Mammary epithelial cell (primary cell): ENCODE measurements at regions of chr17 and their contacts with region 1.

Region 1: GRCh38 chr17:35808962-35809854 is at the start of gene TAF15:
- DNase-seq: peak; percentile 98
- H3K4me3 ChIP-seq: peak within 1 kb of the TSS; percentile 73 to 82 (median 77)
- H3K27ac ChIP-seq: peak within 1 kb of the TSS; percentile 88
- H3K4me1 ChIP-seq: peaks cover 20% of the 10 kb centered on the region
- H3K27me3 ChIP-seq: no peaks in the 10 kb centered on the region
- CTCF ChIP-seq: peak; percentile 87 to 92
- total RNA-seq, gene TAF15: 67.2 to 270 TPM

Region 2: DNA sequence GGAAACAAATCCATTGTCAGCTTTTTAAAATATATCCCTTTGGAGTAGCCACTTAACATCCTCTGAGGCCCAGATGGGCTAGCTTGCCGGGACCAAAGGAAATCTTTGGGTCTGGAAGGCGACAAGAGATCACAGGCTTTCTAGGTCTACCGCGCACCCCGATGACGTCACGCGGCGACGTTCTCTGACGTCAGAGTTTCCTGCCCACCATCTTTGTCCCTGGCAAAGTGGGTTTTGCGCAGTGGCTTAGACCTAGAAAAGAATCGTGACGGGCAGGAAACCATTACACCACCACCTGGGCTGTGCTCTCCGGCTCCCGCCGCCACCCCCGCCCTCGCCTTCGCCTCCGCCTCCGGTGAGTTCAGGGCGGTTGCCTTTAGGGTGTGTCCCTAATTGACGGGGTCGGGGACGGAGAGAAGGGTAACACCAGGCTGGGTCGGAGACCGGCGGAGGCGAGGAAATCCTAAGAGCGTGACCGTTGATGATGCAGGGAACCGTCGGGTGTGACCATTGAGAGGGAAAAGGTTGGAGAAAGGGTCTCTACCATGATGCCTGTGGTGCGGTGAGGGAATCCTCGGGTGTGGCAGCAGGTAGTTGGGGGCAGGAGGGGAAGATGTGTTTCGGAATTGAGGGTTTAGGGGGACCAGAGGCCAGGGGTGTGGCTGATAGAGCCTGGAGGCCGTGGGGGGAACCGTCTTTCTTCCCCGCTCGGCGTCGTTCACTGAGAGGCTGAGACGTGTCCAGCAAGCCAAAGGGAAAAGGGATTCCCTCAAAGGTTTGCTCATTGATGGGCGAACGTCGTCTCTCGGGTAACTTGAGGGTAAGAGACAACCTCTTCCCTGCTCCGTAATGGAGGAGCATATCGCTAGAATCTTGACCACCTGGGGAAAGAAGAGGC is 221.9 kb before region 1 on chr17 and contains the start of gene AP2B1:
- CTCF ChIA-PET with region 1: no interaction called
- dilution Hi-C with region 1: no loop called
- in situ Hi-C with region 1: no loop called
- intact Hi-C with region 1: loop called (anchors 10 kb)
- DNase-seq: peak; percentile 96
- H3K4me3 ChIP-seq: peak within 1 kb of the TSS; percentile 38 to 89 (median 84)
- H3K27ac ChIP-seq: peak within 1 kb of the TSS; percentile 89
- H3K4me1 ChIP-seq: peaks cover 7% of the 10 kb centered on the region
- H3K27me3 ChIP-seq: no peaks in the 10 kb centered on the region
- CTCF ChIP-seq: no peak
- total RNA-seq, gene AP2B1: 168 to 227 TPM

Region 3: GRCh38 chr17:35612924-35613521 is 196.2 kb before region 1 on chr17:
- CTCF ChIA-PET with region 1: interaction called, 12 read pairs
- dilution Hi-C with region 1: no loop called
- in situ Hi-C with region 1: no loop called
- intact Hi-C with region 1: loop called (anchors 1 kb)
- DNase-seq: peak; percentile 20
- H3K4me3 ChIP-seq: no peak overlapping the region
- H3K27ac ChIP-seq: no peak overlapping the region
- H3K4me1 ChIP-seq: no peaks in the 10 kb centered on the region
- H3K27me3 ChIP-seq: no peaks in the 10 kb centered on the region
- CTCF ChIP-seq: peak; percentile 61 to 64

Region 4: GRCh38 chr17:35764123-35764991 is 44.9 kb before region 1 on chr17:
- CTCF ChIA-PET with region 1: interaction called, 12 read pairs
- dilution Hi-C with region 1: no loop called
- in situ Hi-C with region 1: loop called (anchors 5 kb)
- intact Hi-C with region 1: loop called (anchors 1 kb)
- DNase-seq: peak; percentile 86
- H3K4me3 ChIP-seq: peak overlapping the region; percentile 23 to 50 (median 44)
- H3K27ac ChIP-seq: no peak overlapping the region
- H3K4me1 ChIP-seq: peaks cover 10% of the 10 kb centered on the region
- H3K27me3 ChIP-seq: no peaks in the 10 kb centered on the region
- CTCF ChIP-seq: peak; percentile 77 to 95

Region 5: DNA sequence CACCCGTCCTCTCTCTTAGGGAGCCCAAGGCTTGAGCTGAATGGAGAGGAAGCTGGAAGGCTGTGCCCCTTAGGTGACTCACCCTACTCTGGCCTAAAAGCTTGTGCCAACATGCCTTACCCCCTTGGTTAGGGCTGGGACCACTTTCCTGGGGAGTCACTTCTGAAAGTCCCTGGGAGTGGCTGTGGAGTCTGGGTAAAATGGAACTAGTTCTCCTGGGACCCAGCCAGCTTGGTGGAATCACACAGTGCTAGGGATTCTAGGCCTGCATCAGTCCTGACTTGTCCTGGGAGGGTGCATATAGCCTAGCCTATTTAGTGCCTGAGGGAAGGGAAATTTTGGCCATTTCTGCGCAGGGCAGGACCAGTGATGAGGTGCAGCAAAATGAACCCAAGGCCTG is 24.3 kb before region 1 on chr17:
- CTCF ChIA-PET with region 1: interaction called, 9 read pairs
- dilution Hi-C with region 1: no loop called
- in situ Hi-C with region 1: no loop called
- intact Hi-C with region 1: loop called (anchors 1 kb)
- DNase-seq: peak; percentile 100
- H3K4me3 ChIP-seq: no peak overlapping the region
- H3K27ac ChIP-seq: peak overlapping the region; percentile 96
- H3K4me1 ChIP-seq: peaks cover 64% of the 10 kb centered on the region
- H3K27me3 ChIP-seq: no peaks in the 10 kb centered on the region
- CTCF ChIP-seq: no peak

Region 6: DNA sequence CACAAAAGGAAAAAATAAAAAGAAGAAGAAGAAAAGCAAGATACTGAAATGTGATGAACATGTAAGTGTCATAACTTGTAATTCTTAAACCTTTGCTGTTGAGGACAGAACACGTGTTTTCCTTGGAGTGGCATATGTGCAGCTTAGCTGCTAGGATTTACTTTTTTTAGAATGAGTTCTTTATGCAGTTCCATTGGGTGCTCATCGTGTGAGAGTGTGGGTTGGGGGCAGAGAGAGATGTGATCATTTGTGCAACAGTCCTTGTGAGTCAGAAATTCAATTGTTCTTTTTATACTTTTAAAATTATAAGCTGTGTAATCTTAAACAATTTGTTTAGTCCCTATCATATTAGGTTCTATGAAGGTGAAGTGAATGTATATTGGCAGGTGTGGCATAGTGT is 776.9 kb after region 1 on chr17:
- CTCF ChIA-PET with region 1: no interaction called
- dilution Hi-C with region 1: no loop called
- in situ Hi-C with region 1: no loop called
- intact Hi-C with region 1: no loop called
- DNase-seq: no peak
- H3K4me3 ChIP-seq: no peak overlapping the region
- H3K27ac ChIP-seq: no peak overlapping the region
- H3K4me1 ChIP-seq: peaks cover 2% of the 10 kb centered on the region
- H3K27me3 ChIP-seq: no peaks in the 10 kb centered on the region
- CTCF ChIP-seq: no peak

Region 7: DNA sequence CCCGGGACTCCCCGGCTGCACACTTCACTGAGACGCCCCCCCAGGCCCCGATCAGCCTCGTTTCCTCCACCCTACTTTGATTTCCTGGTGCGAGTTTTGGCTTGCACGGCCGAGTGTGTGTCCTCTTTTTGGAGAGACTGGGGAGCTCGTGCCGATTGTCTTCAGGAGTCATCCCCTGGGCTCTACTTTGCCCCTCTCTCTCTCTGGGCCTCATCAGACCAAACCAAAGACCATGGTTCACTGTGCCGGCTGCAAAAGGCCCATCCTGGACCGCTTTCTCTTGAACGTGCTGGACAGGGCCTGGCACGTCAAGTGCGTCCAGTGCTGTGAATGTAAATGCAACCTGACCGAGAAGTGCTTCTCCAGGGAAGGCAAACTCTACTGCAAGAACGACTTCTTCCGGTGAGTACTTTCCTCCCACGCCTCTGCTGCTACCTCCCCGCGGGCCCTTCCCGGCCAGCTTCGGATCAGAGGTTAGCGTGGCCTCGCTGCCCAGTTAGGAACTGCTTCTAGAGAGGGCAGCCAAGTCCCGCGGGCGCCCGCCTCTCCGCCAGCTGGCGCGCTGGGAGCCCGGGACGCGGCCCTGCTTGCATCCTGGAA is 1128.9 kb after region 1 on chr17:
- CTCF ChIA-PET with region 1: no interaction called
- dilution Hi-C with region 1: no loop called
- in situ Hi-C with region 1: no loop called
- intact Hi-C with region 1: loop called (anchors 10 kb)
- DNase-seq: no peak
- H3K4me3 ChIP-seq: no peak overlapping the region
- H3K27ac ChIP-seq: no peak overlapping the region
- H3K4me1 ChIP-seq: peaks cover 58% of the 10 kb centered on the region
- H3K27me3 ChIP-seq: peaks cover 98% of the 10 kb centered on the region
- CTCF ChIP-seq: no peak